Panc1 (cell line): ENCODE measurements at regions of chr17 and their contacts with region 1.

Region 1: DNA sequence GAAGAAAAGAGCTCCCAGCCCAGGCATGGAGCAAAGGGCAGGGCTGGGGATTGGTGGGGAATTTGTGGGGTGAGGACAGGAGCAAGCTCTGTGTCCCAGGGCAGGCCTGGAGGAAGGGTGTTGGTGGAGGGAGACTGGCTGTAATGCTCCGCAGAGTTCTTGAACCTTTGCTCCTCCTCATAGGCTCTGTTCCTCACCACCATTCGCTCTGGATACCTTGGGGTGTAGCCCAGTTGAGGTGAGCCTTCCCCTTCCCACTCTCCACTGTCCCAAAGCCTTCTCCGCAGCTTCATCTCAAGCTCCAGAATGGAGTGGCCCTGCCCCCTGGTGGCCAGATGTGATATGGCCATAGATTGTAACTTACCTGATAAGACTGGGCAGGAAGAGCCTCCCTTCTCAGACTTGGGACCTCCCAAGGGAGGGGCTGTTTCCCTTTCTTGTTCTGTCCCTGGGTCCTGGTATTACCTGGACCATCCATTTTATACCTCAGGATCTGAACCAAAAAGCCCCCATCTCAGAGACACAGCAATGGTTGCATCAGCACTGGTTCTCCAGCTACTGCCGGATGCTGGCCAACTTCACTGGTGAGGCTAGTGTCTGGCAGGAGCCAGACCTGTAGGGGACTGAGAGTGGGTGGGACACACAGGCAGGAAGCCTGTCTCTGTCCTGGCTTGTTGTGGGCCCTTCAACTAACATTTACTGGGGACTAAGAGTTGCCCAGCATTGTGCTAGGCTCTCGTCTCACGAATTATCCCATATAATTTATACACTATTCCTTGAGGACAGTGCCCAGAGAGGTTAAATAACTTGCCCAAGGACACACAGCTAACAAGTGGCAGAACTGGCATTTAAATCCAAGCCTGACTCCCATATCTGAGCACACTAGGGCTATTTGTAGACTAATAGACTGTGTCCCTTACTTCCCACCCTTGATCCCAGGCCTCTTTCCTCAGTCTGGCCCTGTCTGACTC is 19.1 kb upstream of the STAC2 start:
- DNase-seq: peak; percentile 51
- ATAC-seq: peak; percentile 90
- H3K4me3 ChIP-seq: no peak overlapping the region
- H3K27ac ChIP-seq: no peak overlapping the region
- H3K4me1 ChIP-seq: no peaks in the 10 kb centered on the region; the same call in 1 of the 2 replicates
- H3K27me3 ChIP-seq: no peaks in the 10 kb centered on the region
- CTCF ChIP-seq: peak; percentile 85

Region 2: GRCh38 chr17:38982858-38983746 is 261.8 kb before region 1 on chr17:
- CTCF ChIA-PET with region 1: interaction called, 11 read pairs
- POLR2A ChIA-PET with region 1: no interaction called
- in situ Hi-C with region 1: no loop called
- intact Hi-C with region 1: no loop called
- DNase-seq: no peak
- ATAC-seq: peak; percentile 80
- H3K4me3 ChIP-seq: no peak overlapping the region
- H3K27ac ChIP-seq: no peak overlapping the region
- H3K4me1 ChIP-seq: no peaks in the 10 kb centered on the region
- H3K27me3 ChIP-seq: no peaks in the 10 kb centered on the region
- CTCF ChIP-seq: peak; percentile 66

Region 3: GRCh38 chr17:39164675-39165143 is 80.2 kb before region 1 on chr17:
- CTCF ChIA-PET with region 1: interaction called, 10 read pairs
- POLR2A ChIA-PET with region 1: no interaction called
- in situ Hi-C with region 1: no loop called
- intact Hi-C with region 1: no loop called
- DNase-seq: peak; percentile 25
- ATAC-seq: peak; percentile 87
- H3K4me3 ChIP-seq: peak overlapping the region; percentile 17 to 25
- H3K27ac ChIP-seq: 0 out of 2 replicates have a peak overlapping the region, but pooled peaks have one; percentile 23
- H3K4me1 ChIP-seq: peaks cover 4% of the 10 kb centered on the region; the same call in 1 of the 2 replicates
- H3K27me3 ChIP-seq: no peaks in the 10 kb centered on the region
- CTCF ChIP-seq: peak; percentile 76

Region 4: DNA sequence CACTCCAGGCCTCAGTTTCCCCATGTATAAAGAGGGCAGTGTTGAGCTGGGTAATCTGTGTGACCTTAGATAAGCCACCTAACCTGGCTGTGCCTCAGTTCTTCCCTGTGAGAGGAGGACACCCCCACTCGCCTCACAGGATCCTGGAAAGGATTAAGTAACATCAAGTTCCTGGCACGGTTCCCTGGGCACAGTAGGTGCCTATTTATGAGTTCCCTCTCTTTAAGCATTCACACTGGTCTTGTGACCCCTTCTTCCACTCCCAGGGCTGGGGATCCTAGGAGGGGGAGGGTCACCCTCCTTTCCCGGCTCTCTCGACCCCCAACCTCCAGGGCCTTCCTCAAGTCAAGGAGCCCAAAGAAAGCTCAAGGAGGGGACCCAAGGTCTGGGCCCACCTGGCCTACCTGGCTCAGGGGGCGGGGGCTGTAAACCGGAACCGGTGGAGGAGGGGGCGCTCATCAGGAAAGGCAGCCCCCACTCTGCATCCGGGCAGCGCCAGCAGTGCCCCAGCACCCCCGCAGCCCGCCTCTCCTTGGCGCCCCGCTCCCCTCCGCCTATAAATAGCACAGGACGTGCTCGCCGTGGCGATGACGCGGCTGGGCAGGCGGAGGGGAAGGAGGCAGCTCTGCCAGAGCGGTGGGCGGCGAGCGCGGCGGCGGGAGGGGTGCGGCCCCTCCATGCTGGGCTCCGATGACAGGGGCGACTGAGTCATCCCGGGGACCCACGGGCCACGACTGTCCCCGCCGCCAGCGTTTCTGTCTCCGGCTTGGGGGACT is 35.4 kb before region 1 on chr17:
- CTCF ChIA-PET with region 1: interaction called, 26 read pairs
- POLR2A ChIA-PET with region 1: interaction called, 3 read pairs
- in situ Hi-C with region 1: no loop called
- intact Hi-C with region 1: loop called (anchors 2 kb)
- DNase-seq: no peak
- ATAC-seq: no peak
- H3K4me3 ChIP-seq: peak overlapping the region in 1 of 2 experiments; percentile 1; a peak in 1 of 4 replicates
- H3K27ac ChIP-seq: no peak overlapping the region
- H3K4me1 ChIP-seq: peaks cover 5% of the 10 kb centered on the region; the same call in 1 of the 2 replicates
- H3K27me3 ChIP-seq: no peaks in the 10 kb centered on the region
- CTCF ChIP-seq: no peak

Region 5: DNA sequence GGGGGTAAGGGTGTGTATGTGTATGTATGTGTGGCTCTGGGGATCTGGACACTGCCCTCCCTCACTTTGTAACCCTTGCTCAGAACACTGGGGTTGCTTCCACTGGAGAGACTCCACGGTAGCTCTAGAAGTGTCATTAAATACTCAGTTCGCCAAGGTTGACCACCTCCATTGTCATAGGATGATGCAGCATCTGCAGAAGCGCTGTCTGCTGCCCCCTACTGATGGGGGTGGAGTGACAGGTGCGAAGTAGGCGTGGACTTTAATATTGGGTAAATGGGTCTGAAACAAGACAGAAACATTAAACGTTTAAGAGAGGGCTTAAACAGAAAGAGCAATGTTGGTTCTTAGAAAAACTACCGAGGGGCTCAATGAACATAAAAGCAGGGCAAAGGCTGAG is 16.4 kb after region 1 on chr17:
- CTCF ChIA-PET with region 1: no interaction called
- POLR2A ChIA-PET with region 1: no interaction called
- in situ Hi-C with region 1: no loop called
- intact Hi-C with region 1: no loop called
- DNase-seq: no peak
- ATAC-seq: no peak
- H3K4me3 ChIP-seq: no peak overlapping the region
- H3K27ac ChIP-seq: no peak overlapping the region
- H3K4me1 ChIP-seq: no peaks in the 10 kb centered on the region
- H3K27me3 ChIP-seq: no peaks in the 10 kb centered on the region
- CTCF ChIP-seq: peak; percentile 25; the same call in 1 of the 2 replicates

Region 6: DNA sequence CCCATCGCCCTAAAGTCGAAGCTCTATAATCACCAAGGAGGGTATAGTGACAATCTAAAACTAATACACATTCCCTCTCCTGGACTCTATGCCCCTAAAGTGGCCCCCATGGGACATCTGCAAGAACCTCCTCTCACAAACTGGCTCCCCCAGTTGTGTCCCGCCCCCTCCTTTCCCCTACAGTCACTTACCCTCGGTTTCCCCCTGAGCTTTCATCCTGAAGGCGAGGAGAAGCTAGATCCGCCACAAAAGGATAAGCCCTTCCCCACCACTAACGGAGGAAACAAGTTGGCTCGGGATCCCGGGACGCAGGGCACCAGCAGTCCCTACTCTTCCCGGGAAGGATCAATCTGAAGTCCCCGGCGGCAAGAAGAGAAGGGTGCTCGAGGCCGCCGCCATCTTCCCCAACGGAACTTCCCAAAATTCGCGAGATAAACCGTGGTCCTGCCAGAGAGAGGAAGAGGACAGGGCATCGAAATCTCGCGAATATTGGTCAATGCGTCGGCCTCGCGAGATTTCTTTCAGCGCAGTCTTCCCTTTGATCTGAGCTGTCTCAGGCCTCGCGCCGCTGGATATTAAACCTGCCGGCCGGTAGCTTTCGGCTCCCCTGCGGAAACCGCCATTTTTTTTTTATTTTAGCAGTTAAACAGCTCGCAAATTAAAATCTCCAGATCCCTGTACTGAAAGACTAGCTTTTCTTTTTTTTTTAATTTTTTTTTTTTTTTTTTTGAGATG is 206.1 kb after region 1 on chr17 and contains the start of gene MED1:
- CTCF ChIA-PET with region 1: no interaction called
- POLR2A ChIA-PET with region 1: no interaction called
- in situ Hi-C with region 1: no loop called
- intact Hi-C with region 1: no loop called
- DNase-seq: peak; percentile 88
- ATAC-seq: peak; percentile 100
- H3K4me3 ChIP-seq: peak within 1 kb of the TSS; percentile 96 to 97
- H3K27ac ChIP-seq: peak within 1 kb of the TSS; percentile 97
- H3K4me1 ChIP-seq: no peaks in the 10 kb centered on the region; the same call in 1 of the 2 replicates
- H3K27me3 ChIP-seq: no peaks in the 10 kb centered on the region
- CTCF ChIP-seq: no peak
- total RNA-seq, gene MED1: 41.4 TPM